ENCODE measurements at regions of chr7 and their contacts with region 1.

Region 1: DNA sequence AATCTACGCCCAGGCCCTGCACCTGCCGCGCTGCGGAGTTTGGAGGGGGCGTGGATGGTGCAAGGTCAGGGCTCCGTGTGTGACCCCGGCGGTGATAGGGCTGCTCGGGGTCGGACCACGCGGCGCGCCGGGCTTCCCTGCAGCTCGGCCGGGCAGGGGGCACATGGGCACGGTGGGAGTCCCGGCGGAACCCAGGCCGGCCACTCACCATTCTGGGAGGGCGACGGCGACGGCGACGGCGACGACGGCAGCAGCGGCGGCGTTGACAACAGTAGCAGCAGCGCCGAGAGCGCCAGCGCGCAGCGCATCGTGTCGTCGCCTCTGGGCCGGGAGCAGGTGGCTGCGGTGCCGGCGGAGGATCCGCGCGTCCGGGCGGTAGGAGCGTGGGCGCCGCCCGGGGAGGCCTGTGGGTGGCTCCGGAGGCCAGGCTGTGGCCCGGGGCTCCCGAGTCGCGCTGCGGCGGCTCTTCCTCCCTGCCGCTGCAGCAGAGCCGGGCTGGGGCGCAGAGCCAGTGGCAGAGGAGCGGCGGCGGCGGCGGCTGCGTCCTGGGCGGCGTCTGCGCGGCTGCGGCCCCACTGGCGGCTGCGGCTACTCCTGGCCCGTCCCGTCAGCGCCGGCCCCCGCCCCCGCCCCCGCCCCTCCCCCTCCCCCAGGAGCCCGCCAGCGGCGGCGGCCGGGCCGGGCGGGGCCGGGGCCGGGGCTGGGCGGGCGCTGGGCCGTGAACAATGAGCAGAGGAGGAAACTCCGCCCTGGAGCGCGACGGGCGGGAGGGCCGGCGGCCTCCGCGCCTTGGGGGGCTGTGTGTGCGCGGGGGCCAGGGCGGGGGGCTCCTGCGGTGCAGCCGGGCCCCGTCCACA is at the start of gene PODXL:
- DNase-seq: peak in 8 of 10 donors; percentile 42 to 79 (median 52)
- H3K4me3 ChIP-seq: peak within 1 kb of the TSS; percentile 60 to 86 (median 73)
- H3K27ac ChIP-seq: peak within 1 kb of the TSS in 51 of 59 donors; percentile 12 to 88 (median 69)
- H3K27me3 ChIP-seq: no peaks in the 10 kb centered on the region
- CTCF ChIP-seq: peak in 17 of 56 donors; percentile 3 to 42 (median 26)
- total RNA-seq, gene PODXL: 28.4 to 104 (median 51.6) TPM

Region 2: GRCh38 chr7:131604841-131605279 is 48.6 kb after region 1 on chr7:
- intact Hi-C with region 1: loop called in 1 of 2 experiments (anchors 5 kb)
- DNase-seq: no peak
- H3K4me3 ChIP-seq: no peak overlapping the region
- H3K27ac ChIP-seq: peak overlapping the region in 3 of 59 donors; percentile 4 to 16 (median 4)
- H3K27me3 ChIP-seq: no peaks in the 10 kb centered on the region
- CTCF ChIP-seq: no peak

Region 3: DNA sequence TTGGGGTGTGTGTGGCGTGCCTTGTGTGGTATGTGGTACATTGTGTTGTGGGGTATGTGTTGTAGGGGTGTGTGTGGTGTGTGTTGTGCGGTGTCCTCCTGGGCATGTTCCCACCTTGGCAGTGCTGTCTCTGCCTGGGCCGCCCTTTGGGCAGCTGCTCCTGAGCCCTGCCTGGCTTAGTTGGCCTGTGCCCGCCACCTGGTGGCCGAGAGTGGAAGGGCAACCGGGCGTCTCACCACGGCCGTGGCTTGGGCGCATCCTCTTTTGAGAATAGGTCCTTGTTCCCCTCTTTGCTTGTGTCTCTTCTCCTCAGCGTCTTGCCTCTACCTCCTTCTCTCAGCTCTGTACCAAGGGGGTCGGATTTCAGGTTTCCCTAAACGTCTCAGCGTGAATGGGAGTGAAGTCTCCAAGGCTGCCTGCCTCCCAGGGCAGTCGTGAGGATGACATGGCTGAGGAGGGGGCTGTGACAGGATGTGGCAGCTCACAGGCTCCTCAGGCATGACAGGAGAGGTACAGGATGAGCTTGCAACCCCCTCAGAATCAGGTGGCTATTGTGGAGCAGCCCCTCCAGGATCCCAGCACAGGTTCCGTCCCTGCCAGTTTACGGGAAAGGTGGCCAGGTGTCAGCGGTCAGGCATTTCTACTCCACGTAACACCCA is 98.5 kb after region 1 on chr7:
- intact Hi-C with region 1: loop called (anchors 2 to 5 kb)
- DNase-seq: peak; percentile 79 to 95 (median 88)
- H3K4me3 ChIP-seq: no peak overlapping the region
- H3K27ac ChIP-seq: no peak overlapping the region
- H3K27me3 ChIP-seq: peaks cover 0 to 5% (median 0%) of the 10 kb centered on the region in 45 donors
- CTCF ChIP-seq: peak; percentile 68 to 97 (median 91)